ENCODE measurements at regions of chr2 and their contacts with region 1.

Region 1: DNA sequence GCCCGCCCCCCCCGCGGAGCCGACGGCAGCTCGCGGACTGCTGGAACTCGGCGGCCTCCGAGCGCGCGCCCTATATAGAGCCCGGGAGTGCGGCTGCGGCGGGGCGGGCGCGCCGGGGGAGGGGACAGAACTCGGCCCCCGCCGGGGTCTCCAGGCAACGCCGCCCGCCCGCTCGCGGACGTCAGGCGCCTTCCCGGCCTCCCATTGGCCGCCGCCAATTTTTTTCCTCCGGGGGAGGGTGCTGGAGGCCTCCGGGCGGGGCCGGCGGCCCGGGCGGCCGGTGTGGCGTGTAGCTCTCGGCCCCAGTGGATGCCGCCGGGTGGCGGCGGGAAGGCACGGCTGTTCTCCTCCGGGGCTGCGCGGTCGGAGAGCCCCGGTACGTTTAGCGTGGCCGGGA is at the start of gene ZFP36L2:
- DNase-seq: peak; percentile 95
- H3K4me3 Mint-ChIP-seq: peak within 1 kb of the TSS; percentile 97
- H3K27ac Mint-ChIP-seq: peak within 1 kb of the TSS; percentile 92
- H3K4me1 Mint-ChIP-seq: peaks cover 36% of the 10 kb centered on the region
- H3K27me3 Mint-ChIP-seq: no peaks in the 10 kb centered on the region
- total RNA-seq, gene ZFP36L2: 37.3 to 38.4 TPM

Region 2: GRCh38 chr2:42944779-42945415 is 281.7 kb before region 1 on chr2:
- CTCF ChIA-PET with region 1: interaction called, 61 read pairs
- intact Hi-C with region 1: loop called (anchors 1 kb)
- DNase-seq: no peak
- H3K4me3 Mint-ChIP-seq: no peak overlapping the region
- H3K27ac Mint-ChIP-seq: no peak overlapping the region
- H3K4me1 Mint-ChIP-seq: peaks cover 2% of the 10 kb centered on the region
- H3K27me3 Mint-ChIP-seq: no peaks in the 10 kb centered on the region

Region 3: DNA sequence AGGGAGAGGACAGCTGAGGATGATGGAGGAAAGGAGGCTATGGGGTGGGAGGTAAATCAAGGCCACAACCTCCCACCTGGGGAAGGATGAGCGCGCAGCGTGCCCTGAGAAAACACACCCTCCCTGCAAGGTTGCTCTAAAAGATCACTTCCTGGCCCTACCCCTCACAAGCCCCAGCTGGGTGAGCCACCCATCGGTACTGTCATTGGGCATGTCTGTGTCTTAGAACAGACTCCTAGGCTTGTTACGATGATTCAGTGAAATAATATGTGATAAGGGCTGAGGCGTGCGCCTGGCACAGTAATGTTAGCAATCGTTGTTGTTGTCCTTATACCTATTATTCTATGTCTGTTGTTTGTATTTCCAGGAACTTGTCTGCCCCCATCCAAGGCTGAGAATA is 175.2 kb before region 1 on chr2:
- CTCF ChIA-PET with region 1: interaction called, 6 read pairs
- intact Hi-C with region 1: loop called (anchors 1 kb)
- DNase-seq: peak; percentile 77
- H3K4me3 Mint-ChIP-seq: no peak overlapping the region
- H3K27ac Mint-ChIP-seq: no peak overlapping the region
- H3K4me1 Mint-ChIP-seq: peaks cover 32% of the 10 kb centered on the region
- H3K27me3 Mint-ChIP-seq: no peaks in the 10 kb centered on the region

Region 4: DNA sequence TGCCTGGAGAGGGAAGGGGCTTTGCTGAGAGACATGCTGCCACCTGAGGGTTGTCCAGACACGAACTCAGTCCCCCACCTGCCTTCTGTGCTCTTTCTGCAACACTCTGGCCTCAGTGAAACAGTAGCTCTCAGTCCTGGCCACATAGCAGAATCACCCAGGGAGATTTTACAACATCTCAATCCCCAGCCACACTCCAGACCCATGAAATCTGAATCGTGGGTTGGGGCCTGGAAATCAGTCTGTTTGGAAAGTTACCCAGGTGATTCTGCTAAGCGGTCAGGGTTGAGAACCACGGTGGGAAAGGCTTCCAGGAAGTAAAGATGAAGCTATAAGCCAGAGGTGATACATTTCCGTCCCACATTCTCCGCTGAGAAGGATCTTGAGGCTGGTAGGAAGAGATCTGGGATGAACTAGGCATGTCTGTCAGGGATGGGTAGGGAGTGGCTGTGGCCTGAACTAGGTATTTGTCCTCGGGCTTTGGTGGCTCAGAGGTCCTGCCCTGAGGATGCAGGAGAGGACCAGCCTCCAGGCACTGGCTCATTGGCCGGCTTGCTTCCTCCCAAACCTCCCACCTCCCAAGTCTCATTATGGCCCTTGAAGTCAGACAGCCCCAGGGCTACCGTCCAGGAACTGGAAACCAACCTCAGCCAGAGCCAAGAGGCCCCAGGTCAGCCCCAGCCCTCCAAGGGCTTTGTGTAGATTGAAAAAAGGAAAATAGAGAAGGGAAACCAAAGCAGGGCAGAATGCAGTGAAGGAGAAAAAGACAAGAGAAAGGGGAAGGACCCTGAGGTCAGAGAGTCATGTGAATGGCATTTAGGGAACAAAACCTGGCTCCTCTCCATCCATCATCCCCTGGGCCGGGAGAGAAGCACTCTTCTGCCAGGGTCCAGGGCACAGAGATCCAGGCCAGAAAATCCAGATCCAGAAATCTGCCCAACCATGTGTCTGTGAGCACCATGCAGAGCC is 119.7 kb before region 1 on chr2:
- CTCF ChIA-PET with region 1: no interaction called
- intact Hi-C with region 1: no loop called
- DNase-seq: no peak
- H3K4me3 Mint-ChIP-seq: no peak overlapping the region
- H3K27ac Mint-ChIP-seq: no peak overlapping the region
- H3K4me1 Mint-ChIP-seq: peaks cover 2% of the 10 kb centered on the region
- H3K27me3 Mint-ChIP-seq: no peaks in the 10 kb centered on the region

Region 5: DNA sequence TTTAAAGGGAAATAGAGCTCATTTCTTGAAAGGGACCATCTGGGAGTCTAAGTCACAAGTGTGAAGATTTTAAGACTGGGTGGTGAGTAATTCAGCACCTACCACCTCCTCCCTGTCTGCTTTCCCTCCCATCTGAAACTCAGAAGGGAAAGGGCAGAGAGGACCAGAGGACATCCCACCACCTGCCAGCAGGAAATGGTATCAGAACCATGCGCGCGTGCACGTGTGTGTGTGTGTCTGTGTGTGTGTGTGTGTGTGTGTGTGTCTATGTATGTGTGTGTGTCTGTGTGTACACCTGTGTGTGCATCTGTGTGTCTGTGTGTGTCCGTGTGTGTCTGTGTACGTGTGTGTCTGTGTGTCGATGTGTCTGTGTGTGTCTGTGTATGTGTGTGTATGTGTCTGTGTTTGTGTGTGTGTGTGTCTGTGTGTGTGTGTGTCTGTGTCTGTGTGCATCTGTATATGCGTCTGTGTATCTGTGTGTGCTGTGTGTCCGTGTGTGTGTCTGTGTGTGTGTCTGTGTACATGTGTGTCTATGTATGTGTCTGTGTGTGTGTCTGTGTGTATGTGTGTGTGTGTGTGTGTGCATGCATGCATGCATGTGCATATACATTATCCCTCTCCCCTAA is 77.0 kb before region 1 on chr2:
- CTCF ChIA-PET with region 1: interaction called, 11 read pairs
- intact Hi-C with region 1: loop called (anchors 1 kb)
- DNase-seq: peak; percentile 90
- H3K4me3 Mint-ChIP-seq: peak overlapping the region; percentile 26
- H3K27ac Mint-ChIP-seq: peak overlapping the region; percentile 62
- H3K4me1 Mint-ChIP-seq: peaks cover 70% of the 10 kb centered on the region
- H3K27me3 Mint-ChIP-seq: no peaks in the 10 kb centered on the region

Region 6: DNA sequence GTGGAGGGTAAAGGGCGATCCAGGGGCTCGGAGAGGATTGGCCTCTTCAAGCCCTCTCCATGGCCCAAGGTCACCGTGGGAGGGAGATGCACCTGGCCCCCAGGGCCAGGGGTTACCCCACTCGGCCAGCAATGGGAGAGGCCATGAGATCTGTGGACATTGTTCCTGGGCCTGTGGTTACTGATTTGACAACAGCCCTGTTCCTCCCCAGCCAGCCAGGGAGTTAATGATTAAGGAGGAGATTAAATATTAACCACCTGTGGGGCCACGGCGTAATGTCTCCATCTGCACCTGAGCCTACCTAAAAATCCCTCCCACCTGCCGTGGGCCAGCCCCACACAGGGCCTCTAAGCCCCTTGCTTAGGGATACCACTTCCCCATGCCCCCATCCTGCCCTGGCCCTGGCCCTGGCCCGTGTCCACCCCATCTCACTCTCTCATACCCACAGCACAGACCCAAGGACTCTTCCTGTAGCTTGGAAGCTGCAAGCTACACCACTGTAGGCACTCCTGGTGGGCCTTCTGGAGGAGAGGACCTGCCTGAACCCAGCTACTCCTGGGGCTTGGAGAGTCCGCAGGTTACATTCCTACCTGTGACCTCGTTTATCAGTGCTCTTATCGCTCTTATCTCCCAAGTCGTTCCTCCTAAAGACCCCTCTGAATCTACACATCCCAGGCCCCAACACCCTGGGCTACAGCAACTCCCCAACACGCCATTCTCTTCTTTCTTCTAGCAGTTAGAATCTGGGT is 32.3 kb before region 1 on chr2:
- CTCF ChIA-PET with region 1: interaction called, 23 read pairs
- intact Hi-C with region 1: loop called (anchors 1 kb)
- DNase-seq: no peak
- H3K4me3 Mint-ChIP-seq: peak overlapping the region; percentile 79
- H3K27ac Mint-ChIP-seq: peak overlapping the region; percentile 93
- H3K4me1 Mint-ChIP-seq: peaks cover 57% of the 10 kb centered on the region
- H3K27me3 Mint-ChIP-seq: no peaks in the 10 kb centered on the region

Region 7: GRCh38 chr2:43383533-43383932 is 157.0 kb after region 1 on chr2:
- CTCF ChIA-PET with region 1: no interaction called
- intact Hi-C with region 1: no loop called
- DNase-seq: no peak
- H3K4me3 Mint-ChIP-seq: no peak overlapping the region
- H3K27ac Mint-ChIP-seq: no peak overlapping the region
- H3K4me1 Mint-ChIP-seq: peaks cover 26% of the 10 kb centered on the region
- H3K27me3 Mint-ChIP-seq: no peaks in the 10 kb centered on the region

Region 8: GRCh38 chr2:43542285-43542937 is 315.9 kb after region 1 on chr2:
- CTCF ChIA-PET with region 1: interaction called, 5 read pairs
- intact Hi-C with region 1: loop called (anchors 1 kb)
- DNase-seq: no peak
- H3K4me3 Mint-ChIP-seq: no peak overlapping the region
- H3K27ac Mint-ChIP-seq: no peak overlapping the region
- H3K4me1 Mint-ChIP-seq: peaks cover 11% of the 10 kb centered on the region
- H3K27me3 Mint-ChIP-seq: no peaks in the 10 kb centered on the region

Measured in activated naive CD4-positive, alpha-beta T cell treated with anti-CD3 and anti-CD28 coated beads for 36 hours (primary cell).